PC-9 (cell line): ENCODE measurements at regions of chr9 and their contacts with region 1.

Region 1: DNA sequence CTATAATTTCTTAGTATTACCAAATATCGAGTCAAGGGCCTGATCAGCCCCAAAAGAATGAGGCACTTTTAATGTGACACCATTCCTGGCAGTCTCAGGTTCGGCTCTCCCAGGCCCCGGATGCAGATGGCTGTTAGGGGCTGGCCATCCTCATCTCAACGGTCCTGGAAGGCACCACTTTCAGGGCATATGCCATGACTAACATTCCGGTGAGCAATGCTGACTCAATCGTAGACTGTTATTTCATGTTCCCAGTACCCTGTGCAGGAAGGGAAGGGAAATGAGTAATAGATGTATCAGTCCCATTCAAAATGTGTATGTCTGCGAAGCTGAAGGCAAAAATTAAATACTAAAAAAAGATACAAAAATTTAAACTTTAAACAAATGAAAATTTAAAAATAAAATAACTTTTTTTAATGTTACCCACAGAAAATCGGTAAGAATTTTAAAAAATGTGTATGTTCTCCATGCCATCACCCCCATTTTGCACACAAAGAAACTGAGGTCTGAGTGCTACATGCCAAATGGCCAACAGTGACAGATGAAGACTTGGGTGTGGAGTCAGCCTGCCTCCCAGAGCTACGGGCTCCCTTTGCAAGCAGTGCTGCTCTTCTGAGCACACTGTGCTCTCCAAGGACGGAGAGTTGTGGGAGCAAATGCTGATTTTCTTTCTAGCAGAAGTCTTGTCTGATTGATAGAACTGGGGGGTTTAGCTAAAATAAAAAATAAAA is 79.0 kb downstream of the GLDC start:
- DNase-seq: peak; percentile 43 to 88
- H3K4me3 ChIP-seq: peak overlapping the region; percentile 33; the same call in 1 of the 2 replicates
- H3K27ac ChIP-seq: peak overlapping the region; percentile 100
- H3K4me1 ChIP-seq: peaks cover 34% of the 10 kb centered on the region
- H3K27me3 ChIP-seq: no peaks in the 10 kb centered on the region
- CTCF ChIP-seq: no peak

Region 2: GRCh38 chr9:6506571-6506970 is 60.0 kb before region 1 on chr9:
- CTCF ChIA-PET with region 1: no interaction called
- POLR2A ChIA-PET with region 1: no interaction called
- intact Hi-C with region 1: loop called (anchors 10 kb)
- DNase-seq: no peak
- H3K4me3 ChIP-seq: no peak overlapping the region
- H3K27ac ChIP-seq: no peak overlapping the region
- H3K4me1 ChIP-seq: no peaks in the 10 kb centered on the region
- H3K27me3 ChIP-seq: no peaks in the 10 kb centered on the region
- CTCF ChIP-seq: no peak